Activated naive CD4-positive, alpha-beta T cell treated with anti-CD3 and anti-CD28 coated beads for 36 hours (primary cell): ENCODE measurements at regions of chr3 and their contacts with region 1.

Region 1: GRCh38 chr3:71875461-71875947 is 90.6 kb upstream of the PROK2 start:
- DNase-seq: peak; percentile 92
- H3K4me3 Mint-ChIP-seq: no peak overlapping the region
- H3K27ac Mint-ChIP-seq: peak overlapping the region; percentile 76
- H3K4me1 Mint-ChIP-seq: peaks cover 35% of the 10 kb centered on the region
- H3K27me3 Mint-ChIP-seq: no peaks in the 10 kb centered on the region

Region 2: DNA sequence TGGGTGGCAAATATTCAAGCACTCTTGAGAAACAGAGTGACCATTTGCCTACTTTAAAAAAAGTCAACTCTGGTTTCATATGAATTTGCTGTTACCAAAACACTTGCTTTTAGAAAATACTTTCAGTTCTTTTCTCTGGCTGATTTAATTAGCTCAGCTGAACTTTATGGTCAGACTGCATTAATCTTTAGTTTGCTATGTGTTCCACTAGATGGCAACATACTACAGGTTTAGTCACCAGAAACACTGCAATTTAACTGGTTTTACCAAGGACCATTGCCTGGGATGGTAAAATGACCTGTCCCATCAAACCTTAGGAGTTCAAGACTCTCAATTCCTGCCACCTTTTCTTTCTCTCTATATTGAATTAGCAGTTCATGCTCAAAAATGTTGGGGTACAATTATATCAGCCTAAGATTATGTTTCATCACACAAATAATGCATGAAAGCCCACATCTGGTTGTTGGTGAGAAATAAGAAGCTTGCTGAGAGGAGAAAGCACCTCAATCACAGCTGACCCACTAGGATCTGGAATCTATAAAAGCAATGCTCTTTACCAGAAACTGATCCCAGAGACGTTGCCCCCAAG is 164.5 kb before region 1 on chr3:
- CTCF ChIA-PET with region 1: interaction called, 10 read pairs
- intact Hi-C with region 1: loop called (anchors 1 kb)
- DNase-seq: no peak
- H3K4me3 Mint-ChIP-seq: no peak overlapping the region
- H3K27ac Mint-ChIP-seq: no peak overlapping the region
- H3K4me1 Mint-ChIP-seq: peaks cover 50% of the 10 kb centered on the region
- H3K27me3 Mint-ChIP-seq: no peaks in the 10 kb centered on the region

Region 3: DNA sequence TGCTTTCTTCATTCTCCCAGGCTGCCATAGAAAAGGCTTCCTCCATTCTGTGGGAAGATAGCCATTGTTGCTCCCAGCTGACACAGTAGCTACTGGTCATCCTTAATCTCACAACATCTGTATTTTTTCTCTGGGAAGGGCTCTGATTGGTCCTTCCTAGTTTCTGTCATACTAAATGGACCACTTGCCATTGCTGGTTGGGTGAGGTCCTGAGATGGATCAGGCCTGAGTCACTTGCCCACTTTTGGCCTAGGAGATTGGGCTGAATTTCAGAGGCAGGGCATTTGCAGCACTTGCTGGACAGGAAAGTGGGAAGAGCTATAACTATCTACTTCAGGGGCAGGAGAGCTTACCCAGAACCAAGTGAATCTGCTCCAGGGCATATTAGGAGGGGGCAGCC is 16.0 kb after region 1 on chr3:
- CTCF ChIA-PET with region 1: interaction called, 28 read pairs
- intact Hi-C with region 1: no loop called
- DNase-seq: no peak
- H3K4me3 Mint-ChIP-seq: no peak overlapping the region
- H3K27ac Mint-ChIP-seq: no peak overlapping the region
- H3K4me1 Mint-ChIP-seq: no peaks in the 10 kb centered on the region
- H3K27me3 Mint-ChIP-seq: no peaks in the 10 kb centered on the region

Region 4: DNA sequence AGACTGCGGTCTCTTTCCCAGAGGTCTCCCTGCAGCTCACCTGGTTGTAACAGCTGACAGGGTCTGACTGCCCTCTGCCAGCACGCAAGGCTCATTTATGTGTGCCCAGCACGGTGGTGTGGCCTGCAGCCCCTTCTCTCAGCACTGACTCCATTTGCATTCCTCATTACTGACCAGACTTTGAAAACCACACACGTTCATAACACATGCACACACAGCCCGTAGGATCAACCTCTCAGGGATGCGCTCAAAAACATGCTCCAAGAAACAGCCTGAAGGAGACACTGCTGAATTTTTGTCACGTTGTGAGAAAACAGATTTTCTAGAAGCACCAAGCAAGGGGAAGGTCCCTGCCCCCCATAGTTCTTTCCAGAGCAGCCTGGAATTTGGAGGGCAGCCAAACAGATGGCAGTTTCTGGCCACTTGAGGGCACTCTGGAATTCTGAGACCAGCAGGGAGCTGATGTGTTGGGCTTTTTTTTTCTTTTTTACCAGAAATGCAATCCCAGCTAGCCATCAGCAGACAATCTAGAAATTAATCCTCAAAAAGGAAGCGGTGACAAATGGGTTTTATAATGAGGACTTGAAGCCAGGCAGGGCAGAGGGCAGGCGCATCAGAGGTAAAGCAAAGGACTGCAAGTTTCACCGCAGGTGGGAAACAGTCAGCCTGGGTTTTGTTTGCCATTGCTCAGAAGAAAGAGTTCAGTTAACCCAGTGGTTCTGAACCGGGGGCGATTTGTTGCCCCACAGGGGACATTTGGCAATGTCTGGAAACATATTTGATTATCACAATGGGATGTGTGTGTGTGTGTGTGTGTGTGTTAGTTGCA is 80.0 kb after region 1 on chr3:
- CTCF ChIA-PET with region 1: interaction called, 3 read pairs
- intact Hi-C with region 1: loop called (anchors 2 kb)
- DNase-seq: peak; percentile 76
- H3K4me3 Mint-ChIP-seq: no peak overlapping the region
- H3K27ac Mint-ChIP-seq: peak overlapping the region; percentile 1
- H3K4me1 Mint-ChIP-seq: peaks cover 27% of the 10 kb centered on the region
- H3K27me3 Mint-ChIP-seq: no peaks in the 10 kb centered on the region

Region 5: GRCh38 chr3:72270072-72270681 is 394.7 kb after region 1 on chr3:
- CTCF ChIA-PET with region 1: no interaction called
- intact Hi-C with region 1: loop called (anchors 1 kb)
- DNase-seq: peak; percentile 50
- H3K4me3 Mint-ChIP-seq: no peak overlapping the region
- H3K27ac Mint-ChIP-seq: peak overlapping the region; percentile 27
- H3K4me1 Mint-ChIP-seq: peaks cover 65% of the 10 kb centered on the region
- H3K27me3 Mint-ChIP-seq: no peaks in the 10 kb centered on the region

Region 6: DNA sequence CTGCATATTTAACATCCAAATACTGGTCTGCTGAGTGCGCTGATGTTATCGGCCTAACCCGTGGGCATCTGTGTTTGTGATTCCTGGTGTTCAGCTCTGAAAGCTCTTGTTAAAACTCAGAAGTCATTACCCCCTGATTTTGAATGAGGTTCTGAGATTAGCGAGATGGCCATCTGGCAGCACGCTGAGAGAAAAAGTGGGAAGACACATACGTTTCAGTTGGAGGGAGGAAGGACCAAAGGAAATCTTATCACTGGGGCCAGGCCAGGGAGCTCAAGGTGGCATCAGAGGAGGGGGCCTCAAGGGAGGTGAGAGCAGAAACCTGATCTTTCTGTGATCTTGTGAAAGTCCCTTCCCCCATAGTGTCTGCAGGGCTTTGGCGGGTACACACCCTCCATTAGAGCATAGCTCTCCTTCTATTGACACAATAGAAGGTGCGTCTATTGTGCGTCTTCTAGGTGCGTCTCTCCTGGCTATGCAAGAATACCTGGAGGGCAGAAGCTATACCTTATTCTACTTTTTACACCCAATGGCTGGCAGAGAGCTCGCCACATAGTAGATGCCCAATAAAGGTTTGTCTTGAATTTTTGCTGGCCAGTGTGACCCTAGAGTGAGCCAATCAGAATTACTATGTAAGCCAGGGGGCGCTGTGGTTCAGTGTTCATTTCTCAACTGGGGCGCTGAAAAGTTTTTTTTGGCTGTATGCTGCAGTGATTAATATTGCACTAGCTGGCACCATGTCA is 790.4 kb after region 1 on chr3:
- CTCF ChIA-PET with region 1: interaction called, 4 read pairs
- intact Hi-C with region 1: loop called (anchors 10 kb)
- DNase-seq: peak; percentile 81
- H3K4me3 Mint-ChIP-seq: no peak overlapping the region
- H3K27ac Mint-ChIP-seq: no peak overlapping the region
- H3K4me1 Mint-ChIP-seq: no peaks in the 10 kb centered on the region
- H3K27me3 Mint-ChIP-seq: no peaks in the 10 kb centered on the region

Region 7: GRCh38 chr3:73086071-73086494 is 1210.6 kb after region 1 on chr3:
- CTCF ChIA-PET with region 1: no interaction called
- intact Hi-C with region 1: loop called (anchors 5 kb)
- DNase-seq: peak; percentile 69
- H3K4me3 Mint-ChIP-seq: no peak overlapping the region
- H3K27ac Mint-ChIP-seq: no peak overlapping the region
- H3K4me1 Mint-ChIP-seq: peaks cover 8% of the 10 kb centered on the region
- H3K27me3 Mint-ChIP-seq: no peaks in the 10 kb centered on the region